ENCODE measurements at regions of chr2 and their contacts with region 1.

Region 1: DNA sequence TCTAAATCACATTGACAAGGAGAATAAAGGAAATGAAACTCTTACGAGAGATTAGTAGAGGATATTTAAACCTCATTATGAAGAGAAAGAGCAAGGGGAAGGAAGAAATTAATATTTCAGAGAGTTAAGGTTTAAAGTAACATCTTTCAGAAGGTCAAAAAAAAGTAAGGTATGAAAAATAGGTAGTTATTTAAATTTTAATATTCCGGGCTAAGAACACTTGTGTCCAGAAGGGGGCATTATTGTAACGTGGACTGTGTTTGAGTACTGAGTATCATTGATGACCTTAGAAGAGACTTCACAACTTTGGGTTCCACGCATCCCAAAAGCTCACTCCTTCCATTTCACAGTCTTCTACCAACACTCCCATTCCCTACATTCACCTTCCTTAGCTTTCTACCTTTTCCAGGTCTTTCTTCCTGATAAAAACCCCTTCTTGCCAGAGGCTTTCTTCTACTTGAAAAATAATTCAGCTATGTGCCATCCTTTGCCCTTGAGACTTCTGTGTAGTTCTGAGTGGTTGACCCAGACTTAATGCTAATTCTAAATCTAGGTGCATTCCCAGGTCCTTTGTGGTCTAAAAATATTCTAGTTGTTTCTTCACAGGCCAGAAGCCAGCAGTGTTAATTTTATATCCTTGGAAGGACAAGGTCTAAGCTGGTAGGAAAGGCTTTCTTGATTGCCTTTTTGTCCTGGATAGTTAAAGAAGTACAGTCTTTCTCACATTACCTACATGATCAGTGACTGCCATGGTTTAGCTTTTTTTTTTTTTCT is 16.5 kb downstream of the DYNC1I2 start:
- H3K4me3 ChIP-seq: no peak overlapping the region
- H3K27ac ChIP-seq: no peak overlapping the region
- H3K4me1 ChIP-seq: peaks cover 5% of the 10 kb centered on the region
- CTCF ChIP-seq: 0 out of 2 replicates have a peak, but pooled peaks have one; percentile 27

Region 2: DNA sequence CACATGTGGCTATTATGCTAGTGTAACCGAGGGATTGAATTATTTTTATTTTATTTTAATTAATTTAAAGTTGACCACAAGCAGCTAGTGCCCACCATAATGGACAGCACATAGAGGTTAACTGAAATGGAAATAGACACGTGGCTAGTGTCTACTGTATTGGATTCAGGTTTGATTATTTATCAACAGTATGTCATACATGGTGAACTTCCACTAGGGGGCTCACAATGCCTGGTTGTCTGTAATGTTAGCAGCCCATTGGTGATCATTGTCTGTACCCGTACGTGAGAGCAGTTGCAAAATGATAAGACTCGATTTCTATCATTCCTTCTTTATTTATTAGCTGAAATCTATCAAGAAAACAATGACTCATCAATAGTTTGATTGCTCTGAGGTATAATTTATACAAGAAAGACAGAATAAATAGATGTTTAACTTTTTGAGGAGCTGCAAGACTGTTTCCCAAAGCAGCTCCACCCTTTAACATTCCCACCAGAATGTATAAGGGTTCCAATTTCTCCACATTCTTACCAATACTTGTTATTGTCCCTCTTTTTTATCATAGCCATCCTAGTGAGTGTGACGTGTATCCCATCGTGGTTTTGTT is 104.9 kb before region 1 on chr2:
- CTCF ChIA-PET with region 1: interaction called, 31 read pairs
- POLR2A ChIA-PET with region 1: no interaction called
- H3K4me3 ChIP-seq: no peak overlapping the region
- H3K27ac ChIP-seq: no peak overlapping the region
- H3K4me1 ChIP-seq: no peaks in the 10 kb centered on the region
- CTCF ChIP-seq: peak; percentile 43; the same call in 1 of the 2 replicates

Region 3: GRCh38 chr2:171687287-171688128 is 16.3 kb before region 1 on chr2 and contains the start of gene DYNC1I2:
- CTCF ChIA-PET with region 1: interaction called, 14 read pairs
- POLR2A ChIA-PET with region 1: no interaction called
- H3K4me3 ChIP-seq: peak within 1 kb of the TSS; percentile 67
- H3K27ac ChIP-seq: peak within 1 kb of the TSS; percentile 77
- H3K4me1 ChIP-seq: no peaks in the 10 kb centered on the region
- CTCF ChIP-seq: no peak

Region 4: GRCh38 chr2:171754254-171754939 is 50.6 kb after region 1 on chr2:
- CTCF ChIA-PET with region 1: no interaction called
- POLR2A ChIA-PET with region 1: no interaction called
- H3K4me3 ChIP-seq: no peak overlapping the region
- H3K27ac ChIP-seq: no peak overlapping the region
- H3K4me1 ChIP-seq: no peaks in the 10 kb centered on the region
- CTCF ChIP-seq: no peak

Region 5: DNA sequence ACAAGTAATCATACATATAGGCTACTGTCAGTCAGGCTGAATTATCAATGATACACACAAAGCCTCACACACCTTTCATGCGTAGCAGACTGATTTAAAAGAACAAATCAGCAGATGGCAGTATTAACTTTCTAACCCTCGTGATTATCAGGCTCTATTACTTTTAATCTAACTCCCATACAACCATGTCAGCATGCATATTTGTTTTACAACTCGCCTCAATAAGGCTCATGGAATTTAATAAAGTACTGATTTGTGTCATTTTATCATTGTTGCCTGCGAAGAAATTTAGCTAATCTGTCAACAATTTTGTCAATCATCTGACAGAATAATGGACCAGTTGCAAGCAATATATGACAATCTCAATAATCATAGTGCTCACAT is 107.5 kb after region 1 on chr2:
- CTCF ChIA-PET with region 1: interaction called, 17 read pairs
- POLR2A ChIA-PET with region 1: no interaction called
- H3K4me3 ChIP-seq: no peak overlapping the region
- H3K27ac ChIP-seq: no peak overlapping the region
- H3K4me1 ChIP-seq: peaks cover 33% of the 10 kb centered on the region
- CTCF ChIP-seq: peak; percentile 65

Region 6: DNA sequence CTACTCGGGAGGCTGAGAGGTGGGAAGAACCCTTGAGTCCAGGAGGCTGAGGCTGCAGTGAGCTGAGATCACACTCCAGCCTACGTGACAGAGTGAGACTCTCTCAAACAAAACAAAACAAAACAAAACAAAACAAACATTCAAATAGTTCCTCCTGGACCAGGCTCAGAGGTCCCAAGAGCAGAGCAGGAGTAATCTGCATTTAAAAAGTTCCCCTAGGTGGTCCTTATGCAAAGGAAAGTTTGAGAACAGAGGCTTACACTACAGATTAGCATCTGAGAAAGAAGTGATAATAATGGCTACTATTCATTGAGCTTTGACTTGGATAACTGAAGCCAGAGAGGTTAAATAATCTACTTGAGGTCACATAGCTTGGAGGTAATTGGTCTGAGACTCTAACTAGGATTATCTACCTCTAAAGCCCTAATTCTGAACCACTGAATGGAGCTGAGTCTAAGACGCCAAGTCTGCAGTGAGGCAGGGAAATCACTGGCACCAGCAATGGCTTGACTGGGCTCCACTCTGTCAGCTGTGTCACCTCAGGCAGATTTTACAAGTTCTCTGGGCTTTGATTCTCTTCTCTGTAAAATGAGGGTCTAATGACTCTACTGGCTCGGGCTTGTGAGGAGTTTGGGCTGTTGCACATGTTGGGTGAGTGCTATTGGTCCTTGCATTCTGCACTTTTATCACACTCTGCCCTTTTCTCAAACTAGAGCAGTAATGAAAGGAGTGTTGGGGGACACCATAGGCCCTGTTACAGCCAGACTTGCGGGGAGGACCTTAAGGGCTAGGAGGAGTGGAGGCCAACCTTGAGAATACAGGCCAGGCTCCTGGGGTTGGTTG is 428.2 kb after region 1 on chr2:
- CTCF ChIA-PET with region 1: interaction called, 19 read pairs
- POLR2A ChIA-PET with region 1: no interaction called
- H3K4me3 ChIP-seq: no peak overlapping the region
- H3K27ac ChIP-seq: no peak overlapping the region
- H3K4me1 ChIP-seq: no peaks in the 10 kb centered on the region
- CTCF ChIP-seq: no peak